A673 (cell line): ENCODE measurements at regions of chr5 and their contacts with region 1.

Region 1: GRCh38 chr5:134577796-134578363 is 52.4 kb downstream of the JADE2 start:
- DNase-seq: peak; percentile 86
- H3K4me3 ChIP-seq: no peak overlapping the region
- H3K27ac ChIP-seq: no peak overlapping the region
- H3K4me1 ChIP-seq: no peaks in the 10 kb centered on the region
- H3K27me3 ChIP-seq: no peaks in the 10 kb centered on the region
- CTCF ChIP-seq: peak; percentile 91

Region 2: DNA sequence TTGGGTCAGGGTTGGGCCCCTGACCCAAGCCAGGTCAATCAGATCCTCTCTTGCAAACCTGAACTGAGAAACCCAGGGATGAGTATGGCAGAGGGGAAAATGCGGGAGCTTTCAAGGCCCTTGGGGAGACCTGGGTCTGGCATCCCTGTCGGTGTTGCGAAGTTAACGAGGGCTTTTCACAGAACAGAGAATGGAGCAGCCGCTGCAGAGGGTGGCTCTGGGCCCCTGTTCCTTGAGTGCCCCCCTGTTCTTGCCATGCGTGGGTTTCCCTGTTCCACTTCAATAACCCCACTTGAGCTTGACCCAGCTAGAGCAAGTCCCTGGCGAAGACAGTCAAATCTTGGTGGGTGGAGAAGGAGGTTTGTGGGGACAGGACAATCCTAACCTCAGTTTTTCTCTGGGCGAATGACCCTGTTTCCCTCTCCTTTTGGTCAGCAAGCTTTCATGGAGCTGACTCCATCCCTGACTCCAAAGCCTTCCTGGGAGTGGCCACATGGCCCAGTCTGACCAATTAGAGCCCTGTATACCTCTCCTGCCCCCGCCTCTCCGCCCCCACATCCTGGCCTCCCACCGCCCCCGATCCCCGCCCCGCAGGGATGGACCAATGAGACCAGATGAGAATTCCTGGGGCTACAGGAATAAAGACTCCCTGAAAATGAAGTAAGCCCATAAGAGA is 570.2 kb before region 1 on chr5:
- CTCF ChIA-PET with region 1: no interaction called
- POLR2A ChIA-PET with region 1: no interaction called
- intact Hi-C with region 1: no loop called
- DNase-seq: peak; percentile 37
- H3K4me3 ChIP-seq: no peak overlapping the region
- H3K27ac ChIP-seq: no peak overlapping the region
- H3K4me1 ChIP-seq: peaks cover 15% of the 10 kb centered on the region
- H3K27me3 ChIP-seq: no peaks in the 10 kb centered on the region
- CTCF ChIP-seq: no peak

Region 3: GRCh38 chr5:134184155-134185135 is 393.4 kb before region 1 on chr5:
- CTCF ChIA-PET with region 1: no interaction called
- POLR2A ChIA-PET with region 1: no interaction called
- intact Hi-C with region 1: loop called (anchors 5 kb)
- DNase-seq: peak; percentile 67
- H3K4me3 ChIP-seq: no peak overlapping the region
- H3K27ac ChIP-seq: no peak overlapping the region
- H3K4me1 ChIP-seq: no peaks in the 10 kb centered on the region
- H3K27me3 ChIP-seq: no peaks in the 10 kb centered on the region
- CTCF ChIP-seq: peak; percentile 86

Region 4: GRCh38 chr5:134540747-134541733 is 36.8 kb before region 1 on chr5:
- CTCF ChIA-PET with region 1: no interaction called
- POLR2A ChIA-PET with region 1: no interaction called
- intact Hi-C with region 1: no loop called
- DNase-seq: no peak
- H3K4me3 ChIP-seq: no peak overlapping the region
- H3K27ac ChIP-seq: no peak overlapping the region
- H3K4me1 ChIP-seq: peaks cover 21% of the 10 kb centered on the region
- H3K27me3 ChIP-seq: no peaks in the 10 kb centered on the region
- CTCF ChIP-seq: no peak

Region 5: DNA sequence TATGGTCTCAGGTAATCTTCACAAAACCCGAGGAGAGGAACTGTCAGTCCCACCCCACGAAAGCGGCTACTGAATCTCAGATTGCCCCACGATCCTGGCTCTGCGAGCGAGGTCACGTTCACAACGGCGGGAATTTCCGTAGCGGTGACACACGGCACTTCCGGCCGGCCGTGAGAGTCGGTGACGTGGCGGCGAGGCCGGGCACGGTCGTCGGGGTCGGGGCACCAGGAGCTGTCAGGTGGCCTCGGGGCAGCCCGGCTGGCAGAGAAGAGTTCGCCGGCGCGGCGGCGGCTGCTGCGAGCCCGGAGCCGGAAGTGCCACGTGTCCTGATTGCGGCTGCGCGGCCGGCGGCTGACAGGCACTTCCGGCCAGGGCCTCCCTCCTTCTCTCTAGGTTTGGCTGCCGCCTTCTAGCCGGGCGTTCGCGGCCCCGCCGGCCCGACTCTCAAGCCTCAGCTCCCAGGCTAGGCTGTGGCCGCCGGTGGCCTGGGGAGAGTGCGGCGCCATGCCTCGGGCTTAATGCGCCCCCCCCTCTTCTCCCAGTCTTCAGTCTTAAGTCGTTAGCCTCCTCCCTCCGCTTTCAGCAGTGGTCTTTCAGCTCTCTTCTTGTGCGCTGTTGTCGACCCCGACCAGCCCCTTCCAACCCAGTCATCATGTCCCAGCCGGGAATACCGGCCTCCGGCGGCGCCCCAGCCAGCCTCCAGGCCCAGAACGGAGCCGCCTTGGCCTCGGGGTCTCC is 70.7 kb after region 1 on chr5 and contains the start of gene SEC24A:
- CTCF ChIA-PET with region 1: no interaction called
- POLR2A ChIA-PET with region 1: no interaction called
- intact Hi-C with region 1: no loop called
- DNase-seq: peak; percentile 90
- H3K4me3 ChIP-seq: peak within 1 kb of the TSS; percentile 79
- H3K27ac ChIP-seq: peak within 1 kb of the TSS; percentile 84
- H3K4me1 ChIP-seq: no peaks in the 10 kb centered on the region
- H3K27me3 ChIP-seq: no peaks in the 10 kb centered on the region
- CTCF ChIP-seq: no peak
- total RNA-seq, gene SEC24A: 22.0 TPM in 2 replicates